AG04449 (cell line): ENCODE measurements at regions of chr11 and their contacts with region 1.

Region 1: DNA sequence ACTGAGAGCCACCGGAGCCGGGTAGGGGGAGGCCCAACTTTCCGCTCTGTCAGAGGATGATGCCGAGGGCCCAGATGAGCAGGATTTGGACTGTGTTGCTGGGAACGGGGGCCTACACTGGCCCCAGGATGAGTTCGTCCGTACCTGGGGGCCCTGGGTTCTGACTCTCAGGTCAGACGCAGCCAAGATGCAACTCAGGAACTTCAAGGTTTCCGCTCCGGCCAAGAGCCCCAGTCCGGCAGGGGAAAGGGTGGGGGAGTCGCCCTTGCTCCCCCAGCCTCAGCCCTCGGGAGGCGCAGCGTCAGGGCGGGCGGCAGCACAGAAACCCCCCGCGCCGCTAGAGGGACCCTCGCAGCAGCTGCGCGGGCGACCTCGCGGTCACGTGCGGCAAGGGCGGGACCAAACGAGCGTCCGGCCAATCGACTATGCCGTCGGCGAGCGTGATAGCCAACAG is 241 bp upstream of the ARL2 start:
- DNase-seq: peak; percentile 23
- H3K4me3 ChIP-seq: peak overlapping the region; percentile 87
- CTCF ChIP-seq: peak; percentile 80

Region 2: GRCh38 chr11:64846998-64847666 is 166.6 kb before region 1 on chr11:
- CTCF ChIA-PET with region 1: interaction called, 104 read pairs
- POLR2A ChIA-PET with region 1: no interaction called
- DNase-seq: no peak
- H3K4me3 ChIP-seq: no peak overlapping the region
- CTCF ChIP-seq: peak; percentile 93

Region 3: DNA sequence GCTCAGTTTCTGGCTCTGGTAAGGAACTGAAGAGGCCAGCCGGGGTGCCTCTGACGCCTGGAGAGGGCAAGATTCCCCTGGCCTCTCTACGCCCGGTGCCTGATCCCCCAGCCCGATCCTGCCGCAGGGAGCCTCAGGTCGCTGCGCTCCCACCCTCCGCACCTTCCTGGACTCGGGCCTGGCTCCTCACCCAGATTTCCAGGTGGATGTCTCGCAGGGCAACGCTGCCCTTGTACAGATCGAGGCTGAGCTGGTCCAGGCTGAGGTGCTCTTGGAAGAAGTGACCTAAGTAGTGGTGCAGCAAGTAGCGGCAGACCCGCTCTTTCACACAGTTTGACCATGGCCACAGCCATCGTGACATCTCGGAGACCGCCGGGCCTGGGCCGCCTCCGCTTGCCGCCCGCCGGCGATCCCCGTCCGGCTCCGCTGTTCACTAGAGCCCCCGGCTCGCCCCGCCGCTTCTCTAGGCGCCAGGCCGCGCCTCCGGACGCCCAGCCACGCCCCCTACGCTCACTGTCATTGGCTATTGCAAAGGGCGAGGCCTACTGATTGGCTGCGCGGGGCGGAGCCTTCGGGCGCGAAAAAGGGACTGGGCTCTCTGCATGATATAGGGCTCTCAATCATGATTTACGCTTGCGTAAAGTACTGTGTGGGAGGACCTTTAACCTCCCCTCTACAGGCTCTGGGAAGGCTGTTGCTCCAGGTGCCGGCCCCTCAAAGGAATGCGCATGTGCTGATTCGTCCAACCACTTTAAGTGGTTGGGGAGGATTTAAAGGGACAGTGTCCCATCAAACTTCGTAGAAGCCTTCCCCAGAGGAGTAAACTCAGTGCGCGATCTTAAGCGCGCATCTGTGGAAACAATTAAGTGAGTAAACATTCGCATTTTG is 96.7 kb before region 1 on chr11 and contains the start of gene ATG2A:
- CTCF ChIA-PET with region 1: interaction called, 27 read pairs
- POLR2A ChIA-PET with region 1: no interaction called
- DNase-seq: peak; percentile 96
- H3K4me3 ChIP-seq: peak within 1 kb of the TSS; percentile 64
- CTCF ChIP-seq: no peak

Region 4: DNA sequence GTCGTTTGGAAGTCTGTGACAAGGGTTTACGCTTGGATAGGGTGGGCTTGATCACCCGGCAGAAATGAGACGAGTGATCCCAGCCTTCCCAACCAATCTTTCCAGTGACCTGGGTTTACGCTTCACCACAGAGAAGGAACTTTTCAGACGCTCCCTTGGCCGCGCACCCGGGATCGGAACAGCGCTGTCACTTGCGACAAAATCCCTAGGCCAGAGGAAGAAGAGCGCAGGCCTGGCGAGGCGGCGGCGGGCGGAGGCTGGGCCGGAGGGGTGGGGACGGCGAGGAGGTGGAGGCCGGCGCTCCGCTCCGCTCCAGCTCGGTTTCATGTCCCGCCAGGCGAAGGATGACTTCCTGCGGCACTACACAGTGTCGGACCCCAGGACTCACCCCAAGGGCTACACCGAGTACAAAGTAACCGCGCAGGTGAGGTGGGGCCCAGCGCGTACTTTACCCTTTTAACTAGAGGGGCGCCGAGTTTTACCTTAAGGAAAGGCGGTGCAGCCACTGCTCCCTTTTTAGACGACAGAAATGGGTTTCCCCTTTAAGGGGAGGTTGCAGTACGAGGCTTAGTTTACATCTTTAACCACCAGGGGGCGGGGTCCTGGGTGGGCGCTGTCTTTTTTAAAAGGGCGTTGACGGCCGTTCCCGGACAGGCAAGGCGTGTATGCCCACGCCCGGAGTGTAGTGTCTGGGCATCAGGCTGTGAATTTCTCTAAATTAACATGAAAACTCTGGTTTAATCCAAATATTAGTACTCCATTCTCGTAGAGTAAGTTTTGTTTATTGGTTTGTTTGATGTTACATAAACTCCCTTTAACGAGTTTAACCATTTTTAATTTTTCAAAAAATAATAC is 13.7 kb after region 1 on chr11 and contains the start of gene SNX15:
- CTCF ChIA-PET with region 1: interaction called, 140 read pairs
- POLR2A ChIA-PET with region 1: interaction called, 13 read pairs
- DNase-seq: peak; percentile 70
- H3K4me3 ChIP-seq: peak within 1 kb of the TSS; percentile 87
- CTCF ChIP-seq: peak; percentile 56

Region 5: GRCh38 chr11:65040847-65041621 is 27.3 kb after region 1 on chr11 and contains the start of gene SAC3D1:
- CTCF ChIA-PET with region 1: interaction called, 17 read pairs
- POLR2A ChIA-PET with region 1: interaction called, 3 read pairs
- DNase-seq: peak; percentile 37
- H3K4me3 ChIP-seq: peak within 1 kb of the TSS; percentile 73
- CTCF ChIP-seq: no peak

Region 6: GRCh38 chr11:65111744-65112414 is 98.2 kb after region 1 on chr11 and contains the start of gene TM7SF2:
- CTCF ChIA-PET with region 1: interaction called, 70 read pairs
- POLR2A ChIA-PET with region 1: no interaction called
- DNase-seq: no peak
- H3K4me3 ChIP-seq: peak within 1 kb of the TSS; percentile 54
- CTCF ChIP-seq: no peak